ENCODE measurements at regions of chr12 and their contacts with region 1.

Region 1: GRCh38 chr12:98483621-98484503 is 31.5 kb upstream of the TMPO start:
- DNase-seq: no peak
- ATAC-seq: no peak
- H3K4me3 ChIP-seq: no peak overlapping the region
- H3K4me3 Mint-ChIP-seq: no peak overlapping the region
- H3K27ac ChIP-seq: no peak overlapping the region
- H3K27ac Mint-ChIP-seq: no peak overlapping the region
- H3K4me1 ChIP-seq: no peaks in the 10 kb centered on the region
- H3K4me1 Mint-ChIP-seq: no peaks in the 10 kb centered on the region
- H3K27me3 ChIP-seq: peaks cover 0 to 3% of the 10 kb centered on the region in 2 experiments
- H3K27me3 Mint-ChIP-seq: no peaks in the 10 kb centered on the region

Region 2: DNA sequence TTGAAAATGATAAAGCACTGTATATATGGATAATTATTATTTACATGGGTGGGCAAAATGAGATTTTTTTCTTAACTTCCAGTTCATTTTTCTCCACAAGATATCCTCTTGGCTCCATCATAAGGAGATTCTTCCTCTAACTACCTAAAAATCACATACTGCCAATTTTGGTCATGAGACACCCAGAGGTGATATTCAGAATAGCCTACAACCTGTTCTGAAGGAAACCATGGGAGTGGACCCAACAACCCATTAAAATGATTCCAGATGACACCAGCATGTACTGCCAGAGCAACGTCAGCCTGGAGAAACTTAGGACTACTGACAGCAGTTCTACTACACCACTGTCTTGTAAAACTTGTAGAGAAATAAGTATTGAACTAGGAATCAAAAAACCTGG is 104.8 kb before region 1 on chr12:
- CTCF ChIA-PET with region 1: no interaction called
- POLR2A ChIA-PET with region 1: no interaction called
- DNase-seq: no peak
- ATAC-seq: no peak
- H3K4me3 ChIP-seq: no peak overlapping the region
- H3K4me3 Mint-ChIP-seq: no peak overlapping the region
- H3K27ac ChIP-seq: no peak overlapping the region
- H3K27ac Mint-ChIP-seq: no peak overlapping the region
- H3K4me1 ChIP-seq: no peaks in the 10 kb centered on the region
- H3K4me1 Mint-ChIP-seq: no peaks in the 10 kb centered on the region
- H3K27me3 ChIP-seq: peaks cover 2% of the 10 kb centered on the region in 2 experiments
- H3K27me3 Mint-ChIP-seq: peaks cover 10 to 31% of the 10 kb centered on the region in 2 donors

Region 3: DNA sequence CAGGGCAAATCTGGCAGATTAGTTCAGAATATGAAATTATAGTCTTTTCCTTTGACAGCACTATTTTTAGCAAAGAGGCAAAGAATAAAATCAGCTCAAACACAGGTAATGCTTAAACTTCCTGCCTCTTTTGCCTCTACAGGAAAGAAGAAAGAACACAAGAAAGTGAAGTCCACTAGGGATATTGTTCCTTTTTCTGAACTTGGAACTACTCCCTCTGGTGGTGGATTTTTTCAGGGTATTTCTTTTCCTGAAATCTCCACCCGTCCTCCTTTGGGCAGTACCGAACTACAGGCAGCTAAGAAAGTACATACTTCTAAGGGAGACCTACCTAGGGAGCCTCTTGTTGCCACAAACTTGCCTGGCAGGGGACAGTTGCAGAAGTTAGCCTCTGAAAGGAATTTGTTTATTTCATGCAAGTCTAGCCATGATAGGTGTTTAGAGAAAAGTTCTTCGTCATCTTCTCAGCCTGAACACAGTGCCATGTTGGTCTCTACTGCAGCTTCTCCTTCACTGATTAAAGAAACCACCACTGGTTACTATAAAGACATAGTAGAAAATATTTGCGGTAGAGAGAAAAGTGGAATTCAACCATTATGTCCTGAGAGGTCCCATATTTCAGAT is 48.9 kb after region 1 on chr12:
- CTCF ChIA-PET with region 1: interaction called in 1 of 2 experiments, 3 read pairs
- POLR2A ChIA-PET with region 1: interaction called in 1 of 2 experiments, 16 read pairs
- DNase-seq: peak in 3 of 35 experiments; percentile 9 to 69 (median 34)
- ATAC-seq: peak in 1 of 4 experiments; percentile 51
- H3K4me3 ChIP-seq: no peak overlapping the region
- H3K4me3 Mint-ChIP-seq: no peak overlapping the region
- H3K27ac ChIP-seq: no peak overlapping the region
- H3K27ac Mint-ChIP-seq: peak overlapping the region in 1 of 2 donors; percentile 23
- H3K4me1 ChIP-seq: no peaks in the 10 kb centered on the region
- H3K4me1 Mint-ChIP-seq: peaks cover 6 to 28% (median 20%) of the 10 kb centered on the region in 3 donors
- H3K27me3 ChIP-seq: no peaks in the 10 kb centered on the region
- H3K27me3 Mint-ChIP-seq: no peaks in the 10 kb centered on the region

Measured in T-cell (primary cell).